Calu3 (cell line): ENCODE measurements at regions of chr11 and their contacts with region 1.

Region 1: GRCh38 chr11:36149538-36150242 is 139.5 kb downstream of the COMMD9 start:
- DNase-seq: peak; percentile 89
- H3K4me3 Mint-ChIP-seq: peak overlapping the region; percentile 35
- H3K27ac Mint-ChIP-seq: peak overlapping the region; percentile 88
- H3K4me1 Mint-ChIP-seq: peaks cover 46% of the 10 kb centered on the region
- H3K27me3 Mint-ChIP-seq: no peaks in the 10 kb centered on the region
- CTCF ChIP-seq: peak; percentile 61

Region 2: GRCh38 chr11:36041988-36042611 is 107.6 kb before region 1 on chr11:
- CTCF ChIA-PET with region 1: no interaction called
- intact Hi-C with region 1: loop called (anchors 5 kb)
- DNase-seq: peak; percentile 6
- H3K4me3 Mint-ChIP-seq: no peak overlapping the region
- H3K27ac Mint-ChIP-seq: no peak overlapping the region
- H3K4me1 Mint-ChIP-seq: peaks cover 2% of the 10 kb centered on the region
- H3K27me3 Mint-ChIP-seq: no peaks in the 10 kb centered on the region
- CTCF ChIP-seq: peak; percentile 33

Region 3: DNA sequence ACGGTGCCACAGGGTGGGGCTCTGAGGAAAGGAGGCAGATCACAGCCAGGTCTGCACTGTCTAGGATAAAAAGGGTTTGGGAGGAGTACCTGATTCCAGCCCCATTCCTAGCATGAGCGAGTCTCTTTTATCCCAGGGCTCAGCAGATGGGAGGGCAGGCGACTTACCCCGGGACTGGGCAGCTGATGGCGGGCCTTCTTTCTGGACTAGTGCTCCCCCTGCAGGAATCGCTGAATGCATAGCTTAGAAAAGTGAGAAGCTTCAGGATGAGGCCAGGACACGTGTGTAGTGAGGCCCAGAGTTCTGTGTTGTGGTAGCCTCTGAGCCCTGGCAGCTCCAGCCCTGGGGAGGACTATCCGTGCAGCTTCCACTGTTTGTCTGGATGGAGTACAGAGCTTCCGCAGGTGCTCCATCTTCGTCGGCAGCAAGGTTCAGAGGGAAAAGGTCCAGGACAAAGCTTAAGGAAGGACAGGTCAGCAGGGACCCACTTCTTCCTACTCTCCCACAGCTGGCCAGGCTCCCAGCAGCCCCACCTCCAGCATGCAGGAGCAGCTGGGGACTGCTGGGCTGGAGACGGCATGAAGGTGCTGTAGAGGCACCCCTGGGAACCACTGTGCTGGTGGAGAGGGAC is 109.2 kb after region 1 on chr11:
- CTCF ChIA-PET with region 1: interaction called, 6 read pairs
- intact Hi-C with region 1: loop called (anchors 10 kb)
- DNase-seq: peak; percentile 76
- H3K4me3 Mint-ChIP-seq: no peak overlapping the region
- H3K27ac Mint-ChIP-seq: no peak overlapping the region
- H3K4me1 Mint-ChIP-seq: peaks cover 13% of the 10 kb centered on the region
- H3K27me3 Mint-ChIP-seq: peaks cover 70% of the 10 kb centered on the region
- CTCF ChIP-seq: peak; percentile 62